Naive thymus-derived CD4-positive, alpha-beta T cell (primary cell): ENCODE measurements at regions of chr7 and their contacts with region 1.

Region 1: DNA sequence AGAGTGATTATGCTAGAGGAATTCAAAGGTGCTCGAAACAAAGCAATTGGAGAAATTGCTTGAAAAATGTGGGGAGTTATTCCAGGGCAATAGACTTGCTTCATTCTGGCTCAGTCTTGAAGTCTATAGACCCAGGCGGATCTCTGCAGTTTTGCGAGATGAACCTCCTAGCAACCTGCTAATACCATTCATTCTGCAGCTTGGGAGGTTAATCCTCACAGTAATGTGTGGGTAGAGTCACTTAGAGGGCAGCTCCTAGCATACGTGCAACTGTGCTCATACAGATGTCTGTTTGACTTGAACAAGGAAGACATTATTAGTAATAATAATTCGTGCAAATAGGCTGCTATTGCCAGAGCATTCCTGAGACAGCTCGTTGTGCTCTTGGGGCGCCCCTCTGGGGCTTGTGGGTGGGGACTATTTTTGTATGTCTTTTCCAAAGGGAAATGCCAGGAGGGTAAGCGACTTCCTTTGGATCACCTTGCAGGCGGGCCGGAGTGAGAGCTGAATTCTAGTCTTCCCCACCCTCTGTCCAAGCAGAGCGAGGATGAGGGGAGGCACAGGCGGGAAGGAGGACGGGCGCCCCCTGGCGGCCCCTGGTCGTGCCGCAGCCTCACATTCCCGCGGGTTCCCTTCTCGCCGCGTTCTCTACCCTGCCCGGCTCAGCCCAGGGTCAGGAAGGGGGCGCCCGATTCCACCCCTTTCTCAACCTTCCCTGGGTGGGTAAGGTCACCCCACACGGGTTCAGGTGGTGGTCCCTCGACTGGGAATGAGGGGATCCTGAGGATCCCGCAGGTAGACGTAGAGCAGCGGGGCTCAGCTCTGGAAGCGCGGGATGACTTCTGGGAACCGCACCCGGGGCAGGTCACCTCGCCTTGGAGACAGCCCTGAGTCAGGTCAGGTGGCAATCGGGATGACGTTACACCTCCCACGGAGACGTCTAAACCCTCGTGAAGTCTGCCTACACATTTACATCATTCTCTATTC is 241.5 kb downstream of the PHTF2 start:
- DNase-seq: peak in 6 of 9 donors; percentile 23 to 55 (median 44)
- ATAC-seq: peak; percentile 80
- H3K4me3 ChIP-seq: no peak overlapping the region
- H3K4me3 Mint-ChIP-seq: no peak overlapping the region
- H3K27ac ChIP-seq: no peak overlapping the region
- H3K27ac Mint-ChIP-seq: no peak overlapping the region
- H3K4me1 ChIP-seq: no peaks in the 10 kb centered on the region
- H3K4me1 Mint-ChIP-seq: peaks cover 0 to 5% (median 0%) of the 10 kb centered on the region in 7 donors
- H3K27me3 ChIP-seq: peaks cover 0 to 3% of the 10 kb centered on the region in 2 donors
- H3K27me3 Mint-ChIP-seq: peaks cover 11 to 26% (median 21%) of the 10 kb centered on the region in 5 donors

Region 2: GRCh38 chr7:77651573-77652162 is 388.4 kb before region 1 on chr7:
- CTCF ChIA-PET with region 1: interaction called, 6 read pairs
- POLR2A ChIA-PET with region 1: no interaction called
- intact Hi-C with region 1: loop called in 1 of 2 experiments (anchors 1 kb)
- DNase-seq: peak in 7 of 9 donors; percentile 9 to 56 (median 38)
- ATAC-seq: peak; percentile 52
- H3K4me3 ChIP-seq: no peak overlapping the region
- H3K4me3 Mint-ChIP-seq: no peak overlapping the region
- H3K27ac ChIP-seq: no peak overlapping the region
- H3K27ac Mint-ChIP-seq: no peak overlapping the region
- H3K4me1 ChIP-seq: no peaks in the 10 kb centered on the region
- H3K4me1 Mint-ChIP-seq: peaks cover 0 to 2% (median 0%) of the 10 kb centered on the region in 7 donors
- H3K27me3 ChIP-seq: no peaks in the 10 kb centered on the region
- H3K27me3 Mint-ChIP-seq: no peaks in the 10 kb centered on the region

Region 3: DNA sequence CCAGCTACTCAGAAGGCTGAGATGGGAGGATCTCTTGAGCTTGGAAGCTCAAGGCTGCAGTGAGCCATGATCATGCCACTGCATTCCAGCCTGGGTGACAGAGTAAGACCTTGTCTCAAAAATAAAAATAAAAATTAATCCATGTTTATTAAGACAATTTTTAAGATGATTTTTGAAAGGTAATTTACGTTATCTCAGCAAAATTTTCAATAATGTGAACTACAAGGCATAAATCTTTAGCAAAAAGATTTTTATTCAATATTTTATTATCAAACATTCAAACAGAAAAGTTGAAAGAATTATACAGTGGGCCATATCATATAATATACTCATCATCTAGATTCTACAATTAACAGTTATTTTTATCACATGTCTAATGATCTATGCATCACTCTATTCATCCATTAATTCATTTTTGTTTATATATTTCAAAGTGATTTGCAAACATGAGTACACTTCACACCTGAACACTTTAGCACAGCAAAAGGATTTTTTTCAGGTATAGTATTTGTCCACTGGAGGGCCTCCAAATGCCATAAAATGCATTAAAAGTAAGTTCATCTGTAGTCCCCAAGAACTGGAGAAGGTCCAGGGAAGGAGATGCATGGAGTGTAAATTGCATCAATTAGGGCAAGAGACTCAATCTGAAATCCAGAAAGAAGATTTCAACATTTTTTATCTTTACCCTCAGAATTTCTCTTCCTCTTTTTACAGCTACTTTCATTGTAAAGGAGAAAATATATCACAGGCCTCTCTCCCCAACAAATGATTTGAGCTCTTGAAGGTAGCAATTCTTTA is 382.5 kb before region 1 on chr7:
- CTCF ChIA-PET with region 1: interaction called, 4 read pairs
- POLR2A ChIA-PET with region 1: no interaction called
- intact Hi-C with region 1: loop called (anchors 1 kb)
- DNase-seq: peak in 7 of 9 donors; percentile 16 to 54 (median 44)
- ATAC-seq: peak; percentile 69
- H3K4me3 ChIP-seq: no peak overlapping the region
- H3K4me3 Mint-ChIP-seq: no peak overlapping the region
- H3K27ac ChIP-seq: no peak overlapping the region
- H3K27ac Mint-ChIP-seq: no peak overlapping the region
- H3K4me1 ChIP-seq: no peaks in the 10 kb centered on the region
- H3K4me1 Mint-ChIP-seq: no peaks in the 10 kb centered on the region
- H3K27me3 ChIP-seq: no peaks in the 10 kb centered on the region
- H3K27me3 Mint-ChIP-seq: no peaks in the 10 kb centered on the region

Region 4: GRCh38 chr7:77940647-77941046 is 99.4 kb before region 1 on chr7:
- CTCF ChIA-PET with region 1: no interaction called
- POLR2A ChIA-PET with region 1: no interaction called
- intact Hi-C with region 1: loop called (anchors 1 to 2 kb)
- DNase-seq: no peak
- ATAC-seq: no peak
- H3K4me3 ChIP-seq: no peak overlapping the region
- H3K4me3 Mint-ChIP-seq: no peak overlapping the region
- H3K27ac ChIP-seq: no peak overlapping the region
- H3K27ac Mint-ChIP-seq: no peak overlapping the region
- H3K4me1 ChIP-seq: no peaks in the 10 kb centered on the region
- H3K4me1 Mint-ChIP-seq: peaks cover 8 to 14% (median 9%) of the 10 kb centered on the region in 7 donors
- H3K27me3 ChIP-seq: no peaks in the 10 kb centered on the region
- H3K27me3 Mint-ChIP-seq: no peaks in the 10 kb centered on the region

Region 5: DNA sequence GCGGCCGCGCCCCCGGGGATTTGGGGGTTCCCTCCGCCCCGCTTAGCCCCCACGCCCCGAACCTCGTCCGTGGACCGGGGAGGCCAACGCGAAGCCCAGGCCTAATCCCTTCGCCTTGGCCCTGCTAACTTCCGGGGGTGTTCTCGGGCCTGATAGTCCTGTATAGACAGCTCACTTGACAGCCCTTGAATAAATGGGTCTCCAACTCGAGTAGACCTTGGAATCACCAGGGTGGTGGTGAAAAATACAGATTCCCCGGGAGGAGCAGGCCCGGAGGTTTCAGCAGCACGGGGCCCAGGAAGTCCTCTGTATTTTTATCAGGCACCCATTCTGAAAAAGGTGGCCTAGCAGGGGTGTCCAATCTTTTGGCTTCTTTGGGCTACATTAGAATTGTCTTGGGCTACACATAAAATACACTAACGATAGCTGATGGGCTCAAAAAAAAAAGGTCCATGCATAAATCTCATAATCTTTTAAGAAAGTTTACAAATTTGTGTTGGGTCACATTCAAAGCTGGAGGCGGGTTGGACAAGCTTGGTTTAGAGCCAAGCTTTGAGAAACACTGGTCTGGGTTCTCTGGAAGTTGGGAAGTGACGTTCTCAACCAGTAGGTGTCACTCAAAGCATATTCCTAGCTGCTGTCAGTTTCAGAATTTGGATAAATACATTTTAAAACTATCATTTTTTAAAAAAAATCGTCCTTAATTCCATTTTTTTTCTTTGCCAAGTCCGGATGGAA is 19.8 kb before region 1 on chr7:
- CTCF ChIA-PET with region 1: interaction called, 15 read pairs
- POLR2A ChIA-PET with region 1: no interaction called
- intact Hi-C with region 1: loop called (anchors 1 kb)
- DNase-seq: peak in 5 of 9 donors; percentile 18 to 44 (median 25)
- ATAC-seq: peak; percentile 63
- H3K4me3 ChIP-seq: peak overlapping the region; percentile 31
- H3K4me3 Mint-ChIP-seq: peak overlapping the region; percentile 72 to 88 (median 83)
- H3K27ac ChIP-seq: no peak overlapping the region
- H3K27ac Mint-ChIP-seq: peak overlapping the region in 2 of 9 donors; percentile 28 to 56
- H3K4me1 ChIP-seq: peaks cover 0 to 7% of the 10 kb centered on the region in 2 donors
- H3K4me1 Mint-ChIP-seq: peaks cover 6 to 15% (median 11%) of the 10 kb centered on the region in 7 donors
- H3K27me3 ChIP-seq: peaks cover 0 to 13% of the 10 kb centered on the region in 2 donors
- H3K27me3 Mint-ChIP-seq: peaks cover 17 to 53% (median 39%) of the 10 kb centered on the region in 5 donors